Left cardiac atrium (tissue), 4 donors: ENCODE measurements at regions of chr7 and their contacts with region 1.

Region 1: DNA sequence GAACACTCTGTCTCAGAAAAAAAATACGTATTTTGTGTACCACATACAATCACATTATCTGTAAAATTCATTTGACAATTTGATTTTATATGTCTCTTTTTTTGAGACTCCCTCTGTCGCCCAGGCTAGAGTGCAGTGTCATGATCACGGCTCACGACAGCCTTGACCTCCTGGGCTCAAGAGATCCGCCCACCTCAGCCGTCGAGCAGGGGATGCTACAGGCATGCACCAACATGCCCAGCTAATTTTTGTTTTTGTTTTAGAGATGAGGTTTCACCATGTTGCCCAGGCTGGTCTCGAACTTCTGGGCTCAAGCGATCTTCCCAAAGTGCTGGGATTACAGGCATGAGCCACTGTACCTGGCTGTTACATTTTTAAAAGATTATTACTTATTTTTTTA is 11.6 kb upstream of the BAZ1B start:
- DNase-seq: no peak
- ATAC-seq: no peak

Region 2: GRCh38 chr7:73470208-73470607 is 63.5 kb before region 1 on chr7:
- intact Hi-C with region 1: loop called in 1 of 2 experiments (anchors 10 kb)
- DNase-seq: no peak
- ATAC-seq: no peak

Region 3: GRCh38 chr7:73822319-73823076 is 288.8 kb after region 1 on chr7:
- intact Hi-C with region 1: no loop called
- DNase-seq: no peak
- ATAC-seq: peak in 1 of 2 donors; percentile 47